B cell (primary cell): ENCODE measurements at regions of chr19 and their contacts with region 1.

Region 1: GRCh38 chr19:56333505-56333904 is 18.9 kb upstream of the ZSCAN5A start:
- DNase-seq: peak; percentile 68
- ATAC-seq: peak; percentile 60
- H3K4me3 ChIP-seq: no peak overlapping the region
- H3K4me3 Mint-ChIP-seq: no peak overlapping the region
- H3K27ac ChIP-seq: no peak overlapping the region
- H3K27ac Mint-ChIP-seq: no peak overlapping the region
- H3K4me1 ChIP-seq: no peaks in the 10 kb centered on the region
- H3K4me1 Mint-ChIP-seq: no peaks in the 10 kb centered on the region
- H3K27me3 ChIP-seq: no peaks in the 10 kb centered on the region
- H3K27me3 Mint-ChIP-seq: peaks cover 26% of the 10 kb centered on the region
- CTCF ChIP-seq: peak; percentile 84

Region 2: DNA sequence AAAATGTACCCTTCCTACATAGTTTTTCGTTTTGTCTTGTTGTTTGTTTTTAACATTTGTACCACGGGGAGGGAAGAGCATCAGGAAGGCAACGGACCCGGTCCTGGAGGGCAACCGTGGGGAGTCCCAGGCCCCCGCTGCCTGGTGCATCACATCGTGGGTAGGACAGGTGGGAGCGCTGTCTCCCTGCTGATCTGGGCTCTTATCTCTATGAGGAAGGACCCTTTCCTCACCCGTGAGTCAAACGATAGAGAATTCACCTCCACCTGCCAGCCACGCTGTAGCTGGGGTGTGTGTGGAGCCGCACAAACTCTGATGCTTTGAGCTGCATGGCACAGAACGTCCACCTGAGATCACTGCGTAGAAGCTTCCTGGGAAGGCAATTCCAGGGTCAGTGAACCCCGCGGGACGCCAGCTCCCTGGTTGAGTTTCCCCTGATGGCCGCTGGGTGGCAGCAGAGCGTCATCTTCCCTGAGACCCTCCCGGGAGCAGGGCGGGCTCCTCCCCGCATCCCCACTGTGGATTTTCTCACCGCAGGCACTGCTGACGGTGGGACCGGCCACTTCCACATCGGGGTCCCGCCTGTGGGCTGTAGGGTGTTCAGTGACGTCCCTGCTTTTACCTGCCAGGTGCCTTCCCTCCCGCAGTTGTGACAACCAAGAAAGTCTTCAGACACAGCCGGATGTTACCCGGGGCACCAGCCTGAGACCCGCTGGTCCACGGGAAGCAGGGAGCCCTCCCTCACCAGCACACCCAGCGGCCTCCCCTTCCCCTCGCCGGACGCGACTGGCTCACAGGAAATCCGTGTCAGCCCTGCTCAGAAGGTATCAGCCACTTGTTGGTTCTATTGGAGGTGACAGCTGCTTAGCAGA is 267.1 kb before region 1 on chr19:
- CTCF ChIA-PET with region 1: interaction called, 48 read pairs
- POLR2A ChIA-PET with region 1: no interaction called
- intact Hi-C with region 1: loop called (anchors 1 kb)
- DNase-seq: peak; percentile 77
- ATAC-seq: peak; percentile 67
- H3K4me3 ChIP-seq: peak overlapping the region in 4 of 5 experiments; percentile 2 to 42 (median 36)
- H3K4me3 Mint-ChIP-seq: peak overlapping the region; percentile 71
- H3K27ac ChIP-seq: no peak overlapping the region
- H3K27ac Mint-ChIP-seq: no peak overlapping the region
- H3K4me1 ChIP-seq: peaks cover 9 to 10% of the 10 kb centered on the region in 2 donors
- H3K4me1 Mint-ChIP-seq: peaks cover 11% of the 10 kb centered on the region
- H3K27me3 ChIP-seq: peaks cover 0 to 7% (median 3%) of the 10 kb centered on the region in 4 experiments
- H3K27me3 Mint-ChIP-seq: peaks cover 36% of the 10 kb centered on the region
- CTCF ChIP-seq: peak; percentile 97

Region 3: GRCh38 chr19:56252699-56253422 is 80.6 kb before region 1 on chr19:
- CTCF ChIA-PET with region 1: interaction called, 163 read pairs
- POLR2A ChIA-PET with region 1: no interaction called
- intact Hi-C with region 1: loop called (anchors 1 kb)
- DNase-seq: peak; percentile 76
- ATAC-seq: peak; percentile 76
- H3K4me3 ChIP-seq: no peak overlapping the region
- H3K4me3 Mint-ChIP-seq: no peak overlapping the region
- H3K27ac ChIP-seq: no peak overlapping the region
- H3K27ac Mint-ChIP-seq: peak overlapping the region; percentile 63
- H3K4me1 ChIP-seq: peaks cover 0 to 2% of the 10 kb centered on the region in 2 donors
- H3K4me1 Mint-ChIP-seq: no peaks in the 10 kb centered on the region
- H3K27me3 ChIP-seq: no peaks in the 10 kb centered on the region
- H3K27me3 Mint-ChIP-seq: no peaks in the 10 kb centered on the region
- CTCF ChIP-seq: peak; percentile 73

Region 4: DNA sequence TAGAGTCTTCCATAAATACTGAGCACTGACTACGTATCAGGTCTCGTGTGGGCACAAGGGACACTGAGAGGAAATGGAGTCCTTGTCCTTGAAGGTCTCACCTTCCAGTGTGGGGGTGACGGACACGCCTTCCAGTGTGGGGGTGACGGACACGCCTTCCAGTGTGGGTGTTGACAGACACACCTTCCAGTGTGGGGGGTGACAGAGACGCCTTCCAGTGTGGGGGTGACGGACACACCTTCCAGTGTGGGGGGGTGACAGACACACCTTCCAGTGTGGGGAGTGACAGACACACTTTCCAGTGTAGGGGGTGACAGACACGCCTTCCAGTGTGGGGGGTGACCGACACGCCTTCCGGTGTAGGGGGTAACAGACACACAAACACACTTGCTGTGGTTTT is 75.2 kb before region 1 on chr19:
- CTCF ChIA-PET with region 1: interaction called, 163 read pairs
- POLR2A ChIA-PET with region 1: no interaction called
- intact Hi-C with region 1: loop called (anchors 1 kb)
- DNase-seq: no peak
- ATAC-seq: no peak
- H3K4me3 ChIP-seq: no peak overlapping the region
- H3K4me3 Mint-ChIP-seq: no peak overlapping the region
- H3K27ac ChIP-seq: no peak overlapping the region
- H3K27ac Mint-ChIP-seq: no peak overlapping the region
- H3K4me1 ChIP-seq: no peaks in the 10 kb centered on the region
- H3K4me1 Mint-ChIP-seq: no peaks in the 10 kb centered on the region
- H3K27me3 ChIP-seq: no peaks in the 10 kb centered on the region
- H3K27me3 Mint-ChIP-seq: no peaks in the 10 kb centered on the region
- CTCF ChIP-seq: no peak

Region 5: DNA sequence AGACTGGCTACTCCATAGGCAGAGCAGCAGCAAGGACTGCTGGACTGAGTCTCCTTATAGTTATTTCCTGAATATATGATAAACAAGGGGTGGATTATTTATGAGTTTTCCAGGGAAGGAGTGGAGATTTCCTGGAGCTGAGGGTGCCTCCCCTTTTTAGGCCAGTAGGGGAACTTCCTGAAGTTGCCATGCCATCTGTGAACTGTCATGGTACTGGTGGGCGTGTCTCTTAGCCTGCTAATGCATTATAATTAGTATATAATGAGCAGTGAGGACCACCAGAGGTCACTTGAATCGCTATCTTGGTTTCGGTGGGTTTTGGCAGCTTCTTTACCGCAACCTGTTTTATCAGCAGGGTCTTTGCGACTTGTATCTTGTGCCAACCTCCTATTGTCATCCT is 32.3 kb before region 1 on chr19:
- CTCF ChIA-PET with region 1: no interaction called
- POLR2A ChIA-PET with region 1: no interaction called
- intact Hi-C with region 1: no loop called
- DNase-seq: no peak
- ATAC-seq: no peak
- H3K4me3 ChIP-seq: no peak overlapping the region
- H3K4me3 Mint-ChIP-seq: no peak overlapping the region
- H3K27ac ChIP-seq: no peak overlapping the region
- H3K27ac Mint-ChIP-seq: no peak overlapping the region
- H3K4me1 ChIP-seq: no peaks in the 10 kb centered on the region
- H3K4me1 Mint-ChIP-seq: peaks cover 7% of the 10 kb centered on the region
- H3K27me3 ChIP-seq: no peaks in the 10 kb centered on the region
- H3K27me3 Mint-ChIP-seq: no peaks in the 10 kb centered on the region
- CTCF ChIP-seq: no peak

Region 6: DNA sequence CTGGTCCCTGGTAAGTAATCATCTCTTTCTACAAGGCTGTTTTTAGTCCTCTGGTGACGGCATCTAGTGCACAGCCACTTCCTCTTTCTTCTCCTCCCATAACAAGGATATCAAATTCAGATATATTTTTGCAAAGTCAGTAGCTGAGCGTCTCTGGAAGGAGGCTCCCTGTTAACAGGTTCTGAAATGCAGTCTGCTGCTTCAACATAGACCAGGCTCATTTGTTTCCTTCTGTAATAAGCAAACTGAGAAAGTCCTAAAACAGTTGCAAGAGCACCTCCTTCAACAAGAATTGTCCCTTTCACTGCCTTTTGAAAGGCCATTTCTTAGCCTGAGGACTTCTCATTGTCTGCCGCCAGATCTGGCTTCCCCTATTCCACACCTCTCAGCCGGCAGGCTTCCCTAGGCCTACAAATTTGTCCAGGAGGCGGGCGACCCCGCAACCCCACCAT is 11.5 kb before region 1 on chr19:
- CTCF ChIA-PET with region 1: interaction called, 18 read pairs
- POLR2A ChIA-PET with region 1: no interaction called
- intact Hi-C with region 1: no loop called
- DNase-seq: peak; percentile 44
- ATAC-seq: peak; percentile 33
- H3K4me3 ChIP-seq: no peak overlapping the region
- H3K4me3 Mint-ChIP-seq: no peak overlapping the region
- H3K27ac ChIP-seq: peak overlapping the region in 1 of 2 donors; percentile 14
- H3K27ac Mint-ChIP-seq: no peak overlapping the region
- H3K4me1 ChIP-seq: peaks cover 3 to 9% of the 10 kb centered on the region in 2 donors
- H3K4me1 Mint-ChIP-seq: peaks cover 9% of the 10 kb centered on the region
- H3K27me3 ChIP-seq: no peaks in the 10 kb centered on the region
- H3K27me3 Mint-ChIP-seq: no peaks in the 10 kb centered on the region
- CTCF ChIP-seq: no peak